Activated CD4-positive, alpha-beta T cell treated with anti-CD3 and anti-CD28 coated beads, Interleukin-2, amount 10 ng/mL, durations not matched to agents 7 days and 5 days (primary cell): ENCODE measurements at regions of chr5 and their contacts with region 1.

Region 1: GRCh38 chr5:139765409-139766217 is 30.0 kb upstream of the PSD2 start:
- DNase-seq: peak; percentile 84
- H3K4me3 Mint-ChIP-seq: peak overlapping the region; percentile 62
- H3K27ac Mint-ChIP-seq: no peak overlapping the region
- H3K4me1 Mint-ChIP-seq: peaks cover 11% of the 10 kb centered on the region
- H3K27me3 Mint-ChIP-seq: peaks cover 41% of the 10 kb centered on the region

Region 2: GRCh38 chr5:139747583-139748504 is 17.8 kb before region 1 on chr5:
- CTCF ChIA-PET with region 1: interaction called, 62 read pairs
- POLR2A ChIA-PET with region 1: no interaction called
- DNase-seq: no peak
- H3K4me3 Mint-ChIP-seq: peak overlapping the region; percentile 64
- H3K27ac Mint-ChIP-seq: peak overlapping the region; percentile 51
- H3K4me1 Mint-ChIP-seq: peaks cover 19% of the 10 kb centered on the region
- H3K27me3 Mint-ChIP-seq: peaks cover 58% of the 10 kb centered on the region

Region 3: GRCh38 chr5:140336388-140336787 is 570.8 kb after region 1 on chr5:
- CTCF ChIA-PET with region 1: no interaction called
- POLR2A ChIA-PET with region 1: no interaction called
- DNase-seq: no peak
- H3K4me3 Mint-ChIP-seq: no peak overlapping the region
- H3K27ac Mint-ChIP-seq: peak overlapping the region; percentile 17
- H3K4me1 Mint-ChIP-seq: peaks cover 46% of the 10 kb centered on the region
- H3K27me3 Mint-ChIP-seq: no peaks in the 10 kb centered on the region